CD4-positive, alpha-beta T cell (primary cell): ENCODE measurements at regions of chr10 and their contacts with region 1.

Region 1: DNA sequence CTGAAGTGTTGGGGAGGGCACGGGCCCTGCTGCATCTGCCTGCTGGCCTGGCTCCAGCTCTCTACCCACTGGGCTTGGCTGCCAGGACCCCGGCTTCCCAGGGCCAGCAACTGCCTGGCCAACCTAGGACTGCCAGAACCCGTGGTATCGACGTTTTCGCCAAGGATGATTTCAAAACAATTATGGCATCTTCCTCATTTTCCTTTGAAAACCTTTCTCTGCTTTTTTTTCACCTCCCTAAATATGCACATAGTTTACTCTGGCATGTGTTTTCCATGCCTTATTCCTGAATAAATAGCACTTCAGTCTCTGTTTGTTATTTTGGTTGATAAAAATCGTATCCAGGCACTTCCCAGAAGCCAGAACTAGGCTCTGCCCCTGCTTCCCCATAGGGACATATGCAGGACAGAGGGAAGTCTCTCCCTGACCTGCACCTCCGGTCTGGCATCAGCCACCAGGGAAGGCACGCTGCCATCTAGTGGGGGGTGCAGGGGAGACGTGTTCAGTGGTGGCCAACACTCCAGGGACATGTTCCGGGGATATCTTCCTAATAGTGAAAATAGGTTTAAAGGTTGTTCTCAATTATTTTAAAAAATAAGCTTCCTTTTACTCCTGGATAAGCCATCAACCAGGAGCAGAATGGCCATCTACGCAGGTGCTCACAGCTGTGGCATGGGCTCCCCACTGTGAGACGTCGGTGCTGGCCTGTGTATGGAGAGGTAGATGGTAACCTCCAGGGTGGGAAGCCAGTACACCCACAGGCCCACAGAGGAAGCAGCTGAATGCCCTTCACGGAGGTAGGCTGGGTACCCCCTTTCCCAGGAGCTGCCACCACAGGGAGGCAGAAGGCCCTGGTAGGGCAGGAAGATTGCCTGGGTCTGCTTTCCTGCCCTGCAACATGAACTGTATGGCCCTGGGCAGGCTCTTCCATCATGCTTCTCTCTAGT is 30.7 kb upstream of the ANTXRL start:
- DNase-seq: peak; percentile 30 to 66 (median 41)
- ATAC-seq: peak; percentile 76
- H3K4me3 ChIP-seq: no peak overlapping the region
- H3K4me3 Mint-ChIP-seq: peak overlapping the region; percentile 22
- H3K27ac ChIP-seq: no peak overlapping the region
- H3K27ac Mint-ChIP-seq: peak overlapping the region; percentile 48
- H3K4me1 ChIP-seq: peaks cover 6% of the 10 kb centered on the region
- H3K4me1 Mint-ChIP-seq: peaks cover 58% of the 10 kb centered on the region
- H3K27me3 ChIP-seq: no peaks in the 10 kb centered on the region
- H3K27me3 Mint-ChIP-seq: no peaks in the 10 kb centered on the region
- CTCF ChIP-seq: peak; percentile 91

Region 2: DNA sequence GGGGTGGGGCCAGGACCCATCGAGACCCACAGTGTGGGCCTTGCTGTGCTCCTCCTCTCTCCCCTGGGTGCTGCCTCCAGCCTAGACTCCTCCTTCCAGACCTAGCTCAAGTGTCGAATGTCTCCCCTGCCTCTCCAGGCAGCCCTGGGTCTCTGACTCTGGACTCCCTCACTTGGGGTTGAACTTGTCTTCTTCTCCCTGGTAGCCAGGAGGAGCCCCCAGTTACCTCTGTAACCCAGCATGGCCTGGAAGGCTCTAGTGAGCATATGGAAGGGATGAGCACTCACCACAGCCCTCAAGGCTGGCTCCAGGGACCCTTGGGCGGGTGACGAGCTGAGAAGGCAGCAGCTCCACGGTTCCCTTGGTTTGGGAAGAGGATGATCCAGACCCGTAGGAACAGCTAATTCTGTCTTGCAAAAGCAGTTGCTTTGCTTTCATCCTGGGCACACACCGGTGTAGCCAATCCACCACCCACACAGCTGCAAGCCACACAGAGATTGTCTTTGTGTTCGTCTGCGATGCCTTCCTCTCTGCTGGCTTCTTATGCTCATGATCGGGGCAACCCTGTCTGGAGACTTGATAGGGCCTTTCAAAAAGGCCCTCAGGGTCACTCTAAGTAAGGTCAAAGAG is 21.5 kb before region 1 on chr10:
- CTCF ChIA-PET with region 1: no interaction called
- POLR2A ChIA-PET with region 1: no interaction called
- intact Hi-C with region 1: loop called in 1 of 2 experiments (anchors 2 kb)
- DNase-seq: peak in 1 of 14 experiments; percentile 12
- ATAC-seq: no peak
- H3K4me3 ChIP-seq: no peak overlapping the region
- H3K4me3 Mint-ChIP-seq: no peak overlapping the region
- H3K27ac ChIP-seq: no peak overlapping the region
- H3K27ac Mint-ChIP-seq: no peak overlapping the region
- H3K4me1 ChIP-seq: no peaks in the 10 kb centered on the region
- H3K4me1 Mint-ChIP-seq: peaks cover 33% of the 10 kb centered on the region
- H3K27me3 ChIP-seq: no peaks in the 10 kb centered on the region
- H3K27me3 Mint-ChIP-seq: no peaks in the 10 kb centered on the region
- CTCF ChIP-seq: no peak

Region 3: DNA sequence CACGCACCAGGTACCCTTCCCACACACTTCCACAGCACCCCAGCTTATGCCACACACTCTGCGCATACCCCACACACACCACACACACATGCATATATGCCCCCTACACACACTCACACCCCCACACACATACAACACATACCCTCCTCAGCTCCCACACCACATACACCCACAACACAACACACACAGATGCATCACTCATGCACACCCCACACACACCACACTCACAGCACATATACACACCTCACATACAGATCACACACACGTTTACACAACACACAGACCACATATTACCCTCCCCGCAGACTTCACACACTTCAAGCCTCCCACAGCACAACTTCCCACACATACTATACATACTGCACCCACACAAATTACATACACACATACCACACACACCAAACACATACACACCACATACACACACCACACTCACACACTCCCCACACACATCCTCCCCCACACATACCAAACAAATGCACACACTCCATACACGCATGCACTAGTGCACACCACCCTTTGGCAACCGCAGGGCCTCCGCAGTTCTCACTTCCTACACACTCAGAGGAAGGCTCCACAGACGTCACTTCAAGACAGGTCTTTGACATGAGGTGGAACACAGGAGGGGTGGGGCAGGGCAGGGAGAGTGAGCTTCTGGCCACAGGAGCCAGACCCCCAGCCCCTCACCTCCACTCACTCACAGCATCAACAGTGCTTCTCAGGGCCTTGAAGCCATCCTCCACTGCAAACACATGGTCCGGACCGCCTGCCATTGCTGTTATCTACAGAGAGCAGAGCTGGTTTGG is 12.2 kb after region 1 on chr10:
- CTCF ChIA-PET with region 1: no interaction called
- POLR2A ChIA-PET with region 1: interaction called, 12 read pairs
- intact Hi-C with region 1: loop called in 1 of 2 experiments (anchors 2 kb)
- DNase-seq: peak; percentile 40 to 88 (median 59)
- ATAC-seq: peak; percentile 83
- H3K4me3 ChIP-seq: peak overlapping the region; percentile 84
- H3K4me3 Mint-ChIP-seq: no peak overlapping the region
- H3K27ac ChIP-seq: peak overlapping the region; percentile 80 to 82
- H3K27ac Mint-ChIP-seq: no peak overlapping the region
- H3K4me1 ChIP-seq: peaks cover 80% of the 10 kb centered on the region
- H3K4me1 Mint-ChIP-seq: peaks cover 52% of the 10 kb centered on the region
- H3K27me3 ChIP-seq: no peaks in the 10 kb centered on the region
- H3K27me3 Mint-ChIP-seq: no peaks in the 10 kb centered on the region
- CTCF ChIP-seq: no peak